SK-N-SH (cell line): ENCODE measurements at regions of chr2 and their contacts with region 1.

Region 1: DNA sequence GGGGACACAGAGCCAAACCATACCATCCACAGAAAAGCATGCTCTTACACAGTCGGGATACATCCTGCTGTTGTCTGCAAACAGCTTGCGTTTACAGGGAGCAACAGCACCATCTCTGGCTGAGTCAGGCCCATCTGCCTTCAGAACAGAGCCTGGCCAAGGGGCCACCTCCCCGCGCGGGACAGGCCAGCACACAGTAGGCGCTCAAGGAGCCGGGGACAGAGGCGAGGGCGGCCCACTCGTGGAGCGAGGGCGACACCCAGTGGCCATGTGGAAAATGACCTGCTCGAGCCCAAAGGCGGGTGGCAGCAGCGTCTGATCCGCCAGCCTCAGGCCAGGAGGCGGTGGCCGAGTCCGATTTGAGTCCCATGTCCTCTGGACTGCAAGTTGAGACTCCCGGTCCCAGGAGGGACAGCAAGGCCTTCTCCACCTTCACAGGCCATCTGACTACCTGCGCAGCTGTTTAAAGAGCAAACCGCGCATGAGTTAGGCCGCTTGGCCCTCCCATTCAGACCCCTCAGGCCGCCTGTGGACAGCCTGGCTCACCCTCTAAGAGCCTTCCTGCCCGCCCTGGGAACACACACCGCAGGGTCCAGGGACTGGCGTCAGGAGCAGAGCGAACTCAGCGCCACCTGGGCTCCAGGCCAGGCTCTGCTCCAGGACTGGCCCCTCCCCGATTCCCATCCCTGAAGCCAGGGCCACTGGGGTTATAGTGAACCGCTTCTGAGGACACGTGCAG is 38.3 kb downstream of the TTC32 start:
- DNase-seq: peak; percentile 92
- H3K4me3 ChIP-seq: peak overlapping the region in 1 of 2 experiments; percentile 33; a peak in 1 of 4 replicates
- H3K27ac ChIP-seq: no peak overlapping the region
- H3K4me1 ChIP-seq: peaks cover 0 to 4% of the 10 kb centered on the region in 2 experiments; a peak in 1 of 4 replicates
- H3K27me3 ChIP-seq: peaks cover 5% of the 10 kb centered on the region; the same call in 1 of the 2 replicates
- CTCF ChIP-seq: peak; percentile 99
- EP300 ChIP-seq: no peak
- RAD21 ChIP-seq: peak; percentile 98

Region 2: DNA sequence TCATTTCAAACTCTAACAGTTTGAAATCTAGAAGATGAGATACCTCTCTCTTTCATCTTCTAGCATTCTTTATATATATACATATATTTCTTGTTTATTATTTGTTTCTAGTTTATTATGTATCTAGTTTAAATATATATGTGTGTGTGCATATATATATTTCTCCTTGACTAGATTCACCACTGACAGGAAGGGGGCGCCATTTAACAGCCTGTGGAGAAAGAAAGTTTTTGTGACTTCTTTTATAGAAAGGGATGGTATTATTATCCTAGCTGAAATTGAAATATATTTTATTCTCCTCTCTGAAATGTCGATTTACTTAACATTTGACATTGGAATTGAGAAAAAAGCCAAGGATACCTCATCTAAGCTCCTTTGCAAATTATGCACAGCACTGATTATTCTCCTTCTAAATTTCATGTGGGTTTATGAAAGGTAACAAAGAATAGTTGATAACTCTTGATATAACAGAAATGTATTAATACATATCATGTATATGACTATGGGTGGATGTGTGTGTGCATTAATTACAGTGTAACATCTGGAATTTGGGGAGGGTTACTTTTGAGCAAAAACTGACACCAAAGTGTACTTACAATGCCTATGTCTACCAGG is 1113.5 kb before region 1 on chr2:
- CTCF ChIA-PET with region 1: interaction called, 19 read pairs
- POLR2A ChIA-PET with region 1: no interaction called
- DNase-seq: peak; percentile 35
- H3K4me3 ChIP-seq: no peak overlapping the region
- H3K27ac ChIP-seq: peak overlapping the region in 1 of 2 experiments; percentile 19; a peak in 1 of 4 replicates
- H3K4me1 ChIP-seq: peaks cover 0 to 23% of the 10 kb centered on the region in 2 experiments; a peak in 2 of 4 replicates
- H3K27me3 ChIP-seq: no peaks in the 10 kb centered on the region
- CTCF ChIP-seq: peak; percentile 97
- EP300 ChIP-seq: no peak
- RAD21 ChIP-seq: peak; percentile 98

Region 3: DNA sequence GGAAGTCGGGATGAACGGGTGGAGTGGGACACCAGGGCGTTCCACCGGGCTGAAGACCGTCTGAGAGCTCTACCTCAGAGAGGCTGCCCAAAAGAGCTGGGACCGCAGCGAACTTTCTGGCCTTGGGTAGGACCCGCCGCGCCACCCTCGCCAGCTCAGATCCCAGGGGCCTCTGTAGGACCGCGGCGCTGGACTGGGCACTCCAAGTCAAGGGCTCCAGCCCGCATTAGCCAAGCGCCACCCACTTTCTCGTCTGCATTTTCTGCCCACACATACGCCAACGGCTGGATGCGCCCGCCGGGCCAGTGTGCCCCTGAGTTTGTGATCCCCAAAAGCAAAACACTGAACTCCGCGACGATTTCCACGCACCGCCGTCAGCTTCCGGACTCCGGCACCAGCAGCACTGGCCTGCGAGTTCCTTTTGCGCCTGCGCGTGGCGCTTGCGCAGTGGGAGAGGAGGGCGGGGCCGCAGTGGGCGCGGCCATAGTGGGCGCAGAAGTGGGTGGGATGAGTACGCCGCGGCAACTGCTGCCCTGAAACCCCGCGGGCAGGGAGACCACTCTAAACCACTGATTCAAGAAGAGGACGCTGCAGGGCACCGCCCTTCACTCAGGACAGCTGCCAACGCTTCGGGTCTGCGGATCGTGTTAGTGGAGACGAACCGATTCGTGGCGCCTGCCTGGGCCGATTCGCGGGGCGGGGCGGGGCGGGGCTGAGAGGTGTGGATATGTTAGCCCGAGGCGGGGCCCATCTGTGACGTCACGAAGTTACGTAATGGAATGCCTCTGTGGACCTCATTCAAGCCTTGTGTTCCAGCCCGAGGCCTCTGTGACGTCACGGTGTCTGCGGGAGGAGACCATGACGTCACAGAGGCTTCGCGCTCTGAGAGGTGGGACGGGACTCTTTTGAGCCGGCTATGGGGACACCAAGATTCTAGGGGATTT is 515.6 kb before region 1 on chr2:
- CTCF ChIA-PET with region 1: interaction called, 18 read pairs
- POLR2A ChIA-PET with region 1: no interaction called
- DNase-seq: peak; percentile 98
- H3K4me3 ChIP-seq: peak overlapping the region; percentile 81 to 99
- H3K27ac ChIP-seq: peak overlapping the region; percentile 86 to 96
- H3K4me1 ChIP-seq: peaks cover 0 to 28% of the 10 kb centered on the region in 2 experiments; a peak in 2 of 4 replicates
- H3K27me3 ChIP-seq: no peaks in the 10 kb centered on the region
- CTCF ChIP-seq: no peak
- EP300 ChIP-seq: no peak; a peak in 1 of 4 replicates
- RAD21 ChIP-seq: no peak

Region 4: GRCh38 chr2:19355931-19356544 is 507.4 kb before region 1 on chr2:
- CTCF ChIA-PET with region 1: interaction called, 19 read pairs
- POLR2A ChIA-PET with region 1: no interaction called
- DNase-seq: peak; percentile 61
- H3K4me3 ChIP-seq: peak overlapping the region; percentile 75 to 94
- H3K27ac ChIP-seq: peak overlapping the region in 1 of 2 experiments; percentile 63; a peak in 2 of 4 replicates
- H3K4me1 ChIP-seq: peaks cover 5 to 16% of the 10 kb centered on the region in 2 experiments; a peak in 1 of 4 replicates
- H3K27me3 ChIP-seq: no peaks in the 10 kb centered on the region
- CTCF ChIP-seq: no peak
- EP300 ChIP-seq: no peak
- RAD21 ChIP-seq: no peak

Region 5: DNA sequence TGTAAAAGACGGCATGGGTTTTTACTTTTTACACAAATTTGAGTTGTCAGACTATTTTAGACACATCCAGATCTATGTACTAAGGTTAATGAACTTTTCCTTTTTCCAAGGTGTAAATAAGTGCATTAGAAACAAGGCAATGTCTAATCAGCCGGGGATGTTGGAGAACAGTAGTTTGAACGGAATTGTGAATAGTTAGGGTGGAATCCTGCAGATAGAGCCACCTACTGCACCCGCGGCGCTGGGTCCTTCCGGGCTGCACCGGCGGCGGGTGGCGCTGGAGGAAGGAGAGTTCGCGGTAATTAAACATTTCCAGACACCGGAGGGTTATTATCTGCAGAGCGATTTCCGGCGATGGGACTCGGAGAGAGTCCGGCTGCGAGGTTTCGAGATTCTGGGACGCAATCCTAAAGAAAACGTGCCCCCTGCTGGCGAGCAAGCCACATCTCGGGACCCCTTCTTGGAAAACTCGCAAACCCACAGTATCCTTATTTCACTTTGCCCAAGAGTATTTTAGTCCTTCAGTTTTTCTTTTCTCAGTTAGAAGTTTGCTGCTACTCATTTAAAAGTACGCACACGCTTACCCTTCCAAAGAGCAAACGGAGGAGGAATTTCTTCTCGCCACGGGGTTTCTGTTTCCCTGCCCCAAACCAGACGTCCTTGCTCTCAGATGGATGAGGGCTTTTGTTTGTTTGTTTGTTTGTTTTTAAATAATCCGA is 500.6 kb before region 1 on chr2:
- CTCF ChIA-PET with region 1: interaction called, 19 read pairs
- POLR2A ChIA-PET with region 1: no interaction called
- DNase-seq: peak; percentile 91
- H3K4me3 ChIP-seq: peak overlapping the region; percentile 66 to 76
- H3K27ac ChIP-seq: peak overlapping the region; percentile 52 to 59; a peak in 3 of 4 replicates
- H3K4me1 ChIP-seq: peaks cover 5 to 19% of the 10 kb centered on the region in 2 experiments; a peak in 1 of 4 replicates
- H3K27me3 ChIP-seq: no peaks in the 10 kb centered on the region
- CTCF ChIP-seq: peak; percentile 98
- EP300 ChIP-seq: peak; percentile 25 to 44; a peak in 1 of 4 replicates
- RAD21 ChIP-seq: peak; percentile 94

Region 6: DNA sequence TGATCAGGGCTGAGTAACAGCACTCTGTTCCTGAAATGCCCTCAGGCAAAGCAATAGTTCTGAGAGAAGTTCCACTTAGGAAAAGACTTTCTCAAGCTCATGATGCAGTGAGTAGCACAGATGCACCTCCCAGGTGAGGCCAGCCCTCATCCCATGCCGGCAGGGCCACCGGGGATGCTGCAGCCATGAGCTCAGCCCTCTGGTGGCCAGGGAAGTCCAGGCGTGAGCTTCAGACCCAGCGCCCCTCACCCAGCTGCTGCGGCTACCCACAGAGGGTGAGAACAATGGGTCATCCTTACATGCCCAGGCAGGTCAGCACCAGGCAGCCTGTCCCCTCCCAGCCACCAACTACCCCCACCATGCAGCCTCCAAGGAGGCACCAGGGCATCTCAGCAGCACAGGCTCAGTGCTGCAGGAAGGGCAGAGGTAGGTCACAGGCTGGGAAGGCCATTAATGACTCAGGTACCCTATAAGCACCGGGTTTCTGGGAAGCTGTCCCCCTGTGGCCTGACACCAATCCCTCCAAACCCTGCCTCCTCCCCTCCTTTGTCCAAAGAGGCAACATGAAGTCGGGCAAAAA is 12.3 kb before region 1 on chr2:
- CTCF ChIA-PET with region 1: interaction called, 40 read pairs
- POLR2A ChIA-PET with region 1: interaction called, 3 read pairs
- DNase-seq: no peak
- H3K4me3 ChIP-seq: no peak overlapping the region
- H3K27ac ChIP-seq: no peak overlapping the region
- H3K4me1 ChIP-seq: no peaks in the 10 kb centered on the region
- H3K27me3 ChIP-seq: peaks cover 19% of the 10 kb centered on the region
- CTCF ChIP-seq: peak; percentile 33
- EP300 ChIP-seq: no peak
- RAD21 ChIP-seq: 0 out of 2 replicates have a peak, but pooled peaks have one; percentile 6

Region 7: DNA sequence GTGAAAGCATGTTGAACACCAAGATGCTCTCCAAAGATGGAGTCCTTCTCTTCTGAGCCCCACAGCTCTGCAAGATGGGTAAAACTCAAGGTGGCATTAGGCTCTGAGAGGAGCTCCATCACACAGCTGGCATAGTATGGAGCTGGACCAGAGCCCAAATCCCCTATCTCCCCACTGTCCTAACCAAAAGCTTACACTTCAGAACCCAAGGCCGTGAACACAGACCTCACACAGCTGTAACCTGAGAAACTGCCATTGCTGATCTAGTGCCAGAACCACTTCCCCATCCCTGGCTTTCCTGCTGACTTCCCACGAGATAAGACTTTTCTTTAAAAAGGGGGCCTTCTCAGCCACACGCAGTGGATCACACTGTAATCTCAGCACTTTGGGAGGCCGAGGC is 13.3 kb after region 1 on chr2:
- CTCF ChIA-PET with region 1: interaction called, 55 read pairs
- POLR2A ChIA-PET with region 1: no interaction called
- DNase-seq: no peak
- H3K4me3 ChIP-seq: no peak overlapping the region
- H3K27ac ChIP-seq: no peak overlapping the region
- H3K4me1 ChIP-seq: no peaks in the 10 kb centered on the region
- H3K27me3 ChIP-seq: peaks cover 5% of the 10 kb centered on the region; the same call in 1 of the 2 replicates
- CTCF ChIP-seq: no peak
- EP300 ChIP-seq: no peak
- RAD21 ChIP-seq: no peak